Heart left ventricle (tissue), 16 donors: ENCODE measurements at regions of chr18 and their contacts with region 1.

Region 1: DNA sequence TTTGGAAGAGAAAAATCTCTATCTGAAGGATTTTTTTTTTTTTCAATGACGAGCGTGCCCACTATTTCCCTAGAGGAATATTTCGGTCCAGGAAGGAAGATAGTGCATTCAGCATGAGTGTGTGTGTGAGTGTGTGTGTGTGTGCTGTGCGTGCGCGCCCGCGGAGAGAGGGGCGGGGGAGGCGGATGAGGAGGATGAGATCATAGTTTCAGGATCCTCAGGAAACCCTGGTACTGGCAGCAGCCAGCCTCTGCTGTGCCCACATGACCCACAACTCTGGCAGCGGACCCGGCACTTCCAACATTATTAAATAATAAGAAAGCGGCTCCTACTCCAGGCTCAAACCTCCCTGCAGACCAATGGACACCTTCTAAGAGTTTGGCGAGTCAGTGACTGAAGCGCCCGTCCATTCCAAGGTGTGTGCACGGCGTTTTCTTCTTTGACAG is 217.0 kb upstream of the DTNA start:
- DNase-seq: peak; percentile 83 to 91 (median 84)
- ATAC-seq: peak; percentile 89 to 95 (median 92)
- H3K4me3 ChIP-seq: peak overlapping the region; percentile 37 to 73 (median 66)
- H3K27ac ChIP-seq: peak overlapping the region; percentile 72 to 91 (median 85)
- H3K4me1 ChIP-seq: peaks cover 0 to 20% (median 9%) of the 10 kb centered on the region in 12 donors
- H3K27me3 ChIP-seq: peaks cover 0 to 12% (median 0%) of the 10 kb centered on the region in 9 donors
- CTCF ChIP-seq: no peak
- POLR2A ChIP-seq: no peak

Region 2: DNA sequence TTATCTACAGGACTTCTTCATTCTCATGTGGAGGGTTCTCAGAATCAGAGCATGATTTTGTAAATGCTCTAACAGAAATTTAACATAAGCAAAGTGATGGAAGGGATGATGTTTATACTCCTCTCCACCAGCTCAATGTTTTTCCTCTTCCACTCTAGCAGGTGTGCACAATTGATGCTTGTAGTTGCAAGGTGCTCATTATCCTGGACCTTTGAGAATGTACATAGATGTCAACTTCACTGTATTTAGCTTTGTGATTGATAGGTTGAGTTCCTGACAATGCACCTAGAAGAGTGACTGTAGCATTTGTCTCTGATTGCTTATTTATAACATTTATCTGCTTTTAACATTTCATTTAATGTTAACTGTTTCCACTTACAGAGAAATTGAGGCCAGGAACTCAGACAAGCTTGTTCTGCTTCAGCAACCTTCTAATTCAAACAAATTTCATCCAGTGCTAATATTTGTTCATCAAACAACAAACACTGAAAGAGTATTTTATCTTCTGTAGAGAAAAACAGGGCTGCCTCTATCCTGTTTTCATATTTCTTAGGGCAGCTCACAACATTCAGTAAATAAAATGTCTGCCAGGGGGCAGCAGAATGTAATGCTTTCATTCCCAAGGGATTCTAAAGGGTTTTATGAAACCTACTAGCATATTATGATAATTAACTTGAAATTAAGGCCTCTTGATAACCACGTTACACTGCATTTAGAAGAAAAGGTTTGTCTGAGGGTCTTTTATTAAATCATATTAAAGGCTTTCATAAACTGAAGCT is 140.5 kb before region 1 on chr18:
- intact Hi-C with region 1: loop called in 2 of 10 experiments (anchors 10 kb)
- DNase-seq: no peak
- ATAC-seq: no peak
- H3K4me3 ChIP-seq: no peak overlapping the region
- H3K27ac ChIP-seq: no peak overlapping the region
- H3K4me1 ChIP-seq: no peaks in the 10 kb centered on the region
- H3K27me3 ChIP-seq: no peaks in the 10 kb centered on the region
- CTCF ChIP-seq: peak in 10 of 12 donors; percentile 17 to 53 (median 38)
- POLR2A ChIP-seq: no peak

Region 3: GRCh38 chr18:34592961-34593382 is 99.8 kb after region 1 on chr18:
- intact Hi-C with region 1: loop called in 7 of 10 experiments (anchors 1 to 10 kb)
- DNase-seq: peak in 4 of 5 donors; percentile 61 to 78 (median 68)
- ATAC-seq: peak; percentile 89 to 95 (median 94)
- H3K4me3 ChIP-seq: peak overlapping the region in 11 of 12 donors; percentile 26 to 57 (median 48)
- H3K27ac ChIP-seq: peak overlapping the region; percentile 43 to 86 (median 76)
- H3K4me1 ChIP-seq: peaks cover 0 to 37% (median 6%) of the 10 kb centered on the region in 12 donors
- H3K27me3 ChIP-seq: no peaks in the 10 kb centered on the region
- CTCF ChIP-seq: no peak
- POLR2A ChIP-seq: no peak

Region 4: GRCh38 chr18:34647251-34647650 is 154.1 kb after region 1 on chr18:
- intact Hi-C with region 1: loop called in 2 of 10 experiments (anchors 5 to 10 kb)
- DNase-seq: no peak
- ATAC-seq: no peak
- H3K4me3 ChIP-seq: no peak overlapping the region
- H3K27ac ChIP-seq: no peak overlapping the region
- H3K4me1 ChIP-seq: peaks cover 0 to 31% (median 18%) of the 10 kb centered on the region in 12 donors
- H3K27me3 ChIP-seq: no peaks in the 10 kb centered on the region
- CTCF ChIP-seq: no peak
- POLR2A ChIP-seq: no peak

Region 5: DNA sequence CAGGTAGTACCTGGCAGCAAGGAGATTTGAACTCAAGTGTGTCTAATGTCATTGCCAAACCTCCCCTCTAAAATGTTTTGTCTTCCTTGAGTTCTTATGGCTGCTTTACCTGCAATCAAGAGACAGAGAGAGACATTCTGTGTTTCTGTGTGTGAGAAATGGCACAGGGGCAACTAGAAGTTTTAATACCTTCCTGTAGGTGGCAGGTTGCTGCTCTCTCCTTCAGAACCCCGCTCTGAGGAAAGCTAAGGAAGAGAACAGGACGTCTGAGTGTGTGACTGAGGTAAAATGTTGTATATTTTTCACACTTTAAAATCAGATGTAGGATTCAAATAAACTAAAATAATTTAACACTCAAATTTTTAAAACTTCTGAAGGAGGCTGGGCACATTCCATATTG is 236.1 kb after region 1 on chr18:
- intact Hi-C with region 1: loop called in 1 of 10 experiments (anchors 10 kb)
- DNase-seq: no peak
- ATAC-seq: peak; percentile 41 to 68 (median 60)
- H3K4me3 ChIP-seq: no peak overlapping the region
- H3K27ac ChIP-seq: peak overlapping the region in 11 of 12 donors; percentile 20 to 86 (median 69)
- H3K4me1 ChIP-seq: peaks cover 0 to 33% (median 12%) of the 10 kb centered on the region in 12 donors
- H3K27me3 ChIP-seq: no peaks in the 10 kb centered on the region
- CTCF ChIP-seq: peak in 10 of 12 donors; percentile 17 to 53 (median 45)
- POLR2A ChIP-seq: no peak